ENCODE measurements at regions of chr5 and their contacts with region 1.

Region 1: GRCh38 chr5:142769741-142770631 is at the start of gene ARHGAP26:
- DNase-seq: peak; percentile 99
- total RNA-seq, gene ARHGAP26: 31.8 to 39.5 TPM

Region 2: GRCh38 chr5:142726188-142726731 is 43.7 kb before region 1 on chr5:
- intact Hi-C with region 1: loop called in 1 of 2 experiments (anchors 10 kb)
- DNase-seq: no peak

Region 3: DNA sequence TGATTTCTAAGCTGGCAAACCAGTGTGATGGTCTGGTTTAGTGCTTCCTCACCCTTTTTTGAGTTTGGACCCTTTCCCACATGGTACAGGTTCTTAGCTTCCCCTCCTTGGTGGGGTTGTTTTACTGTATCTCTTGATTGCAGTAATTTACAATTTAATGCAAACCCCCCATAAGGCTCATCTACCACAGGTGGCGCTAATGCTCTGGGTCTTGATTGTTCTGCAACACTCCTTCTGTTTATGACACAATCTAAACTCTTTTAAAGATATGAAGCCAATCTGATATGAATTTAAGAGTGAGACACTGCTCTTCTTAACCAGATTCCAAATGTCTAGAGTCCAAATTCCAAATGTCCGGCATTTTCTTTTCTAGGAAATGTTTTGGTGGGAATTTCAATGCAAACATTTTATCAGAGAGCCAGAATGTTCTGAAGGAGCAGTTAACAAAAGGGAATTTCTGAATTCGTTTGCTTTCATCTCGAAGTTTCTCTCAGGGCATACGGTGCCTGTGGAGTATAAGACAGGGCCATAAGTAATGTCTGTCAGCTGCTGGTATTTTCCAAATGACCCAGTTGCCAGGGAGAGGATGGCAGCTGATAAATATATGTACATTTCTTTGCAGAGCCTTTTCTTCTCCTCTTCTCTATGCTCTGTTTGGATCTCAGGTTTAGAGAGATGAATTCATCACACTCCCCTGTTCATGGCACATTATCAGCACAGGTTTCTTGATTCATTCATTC is 247.0 kb after region 1 on chr5:
- intact Hi-C with region 1: no loop called
- DNase-seq: no peak